T-cell (primary cell): ENCODE measurements at regions of chr2 and their contacts with region 1.

Region 1: DNA sequence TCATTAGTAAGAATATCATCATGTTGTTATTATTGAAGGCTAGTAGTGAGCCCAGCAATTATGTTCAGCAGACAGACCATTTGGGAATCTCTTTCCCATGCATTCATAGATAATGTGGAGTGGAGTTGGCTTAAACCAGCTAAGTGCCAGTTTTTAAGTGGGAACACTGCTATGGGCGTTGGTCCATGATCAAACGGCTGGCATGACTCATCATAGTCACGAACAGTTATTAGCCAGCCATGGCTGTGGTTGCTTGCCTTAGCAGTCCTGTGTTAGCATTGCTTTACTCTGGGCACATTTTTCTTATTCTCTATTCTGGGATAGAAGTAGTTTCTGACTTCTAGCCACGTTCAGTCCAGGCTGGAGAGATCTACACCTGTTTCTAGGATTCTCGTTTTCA is 17.7 kb downstream of the EIF4E2 start:
- DNase-seq: no peak
- ATAC-seq: no peak
- H3K4me3 ChIP-seq: no peak overlapping the region
- H3K4me3 Mint-ChIP-seq: no peak overlapping the region
- H3K27ac ChIP-seq: no peak overlapping the region
- H3K27ac Mint-ChIP-seq: no peak overlapping the region
- H3K4me1 ChIP-seq: no peaks in the 10 kb centered on the region
- H3K4me1 Mint-ChIP-seq: no peaks in the 10 kb centered on the region
- H3K27me3 ChIP-seq: no peaks in the 10 kb centered on the region
- H3K27me3 Mint-ChIP-seq: no peaks in the 10 kb centered on the region

Region 2: DNA sequence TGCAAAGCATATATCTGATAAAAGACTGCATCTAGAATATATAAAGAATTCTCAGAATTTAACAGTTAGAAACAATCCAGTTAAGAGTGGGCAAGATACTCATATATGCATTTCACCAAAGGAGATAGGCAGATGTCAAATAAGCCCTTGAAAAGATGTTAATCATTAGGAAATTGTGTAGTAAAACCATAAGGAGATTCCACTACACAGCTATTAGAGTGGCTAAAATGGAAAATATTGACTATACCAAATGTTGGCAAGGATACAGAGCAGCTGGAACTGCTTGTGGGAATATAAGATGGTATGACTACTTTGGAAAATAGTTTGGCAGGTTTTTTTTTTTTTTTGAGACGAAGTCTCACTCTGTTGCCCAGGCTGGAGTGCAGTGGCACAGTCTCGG is 1796.0 kb before region 1 on chr2:
- CTCF ChIA-PET with region 1: no interaction called
- POLR2A ChIA-PET with region 1: interaction called in 1 of 2 experiments, 14 read pairs
- DNase-seq: no peak
- ATAC-seq: no peak
- H3K4me3 ChIP-seq: no peak overlapping the region
- H3K4me3 Mint-ChIP-seq: peak overlapping the region in 1 of 3 donors; percentile 23
- H3K27ac ChIP-seq: no peak overlapping the region
- H3K27ac Mint-ChIP-seq: peak overlapping the region; percentile 41 to 79
- H3K4me1 ChIP-seq: peaks cover 8 to 21% of the 10 kb centered on the region in 2 experiments
- H3K4me1 Mint-ChIP-seq: peaks cover 94 to 97% (median 94%) of the 10 kb centered on the region in 3 donors
- H3K27me3 ChIP-seq: no peaks in the 10 kb centered on the region
- H3K27me3 Mint-ChIP-seq: no peaks in the 10 kb centered on the region